OCI-LY7 (cell line): ENCODE measurements at regions of chr12 and their contacts with region 1.

Region 1: DNA sequence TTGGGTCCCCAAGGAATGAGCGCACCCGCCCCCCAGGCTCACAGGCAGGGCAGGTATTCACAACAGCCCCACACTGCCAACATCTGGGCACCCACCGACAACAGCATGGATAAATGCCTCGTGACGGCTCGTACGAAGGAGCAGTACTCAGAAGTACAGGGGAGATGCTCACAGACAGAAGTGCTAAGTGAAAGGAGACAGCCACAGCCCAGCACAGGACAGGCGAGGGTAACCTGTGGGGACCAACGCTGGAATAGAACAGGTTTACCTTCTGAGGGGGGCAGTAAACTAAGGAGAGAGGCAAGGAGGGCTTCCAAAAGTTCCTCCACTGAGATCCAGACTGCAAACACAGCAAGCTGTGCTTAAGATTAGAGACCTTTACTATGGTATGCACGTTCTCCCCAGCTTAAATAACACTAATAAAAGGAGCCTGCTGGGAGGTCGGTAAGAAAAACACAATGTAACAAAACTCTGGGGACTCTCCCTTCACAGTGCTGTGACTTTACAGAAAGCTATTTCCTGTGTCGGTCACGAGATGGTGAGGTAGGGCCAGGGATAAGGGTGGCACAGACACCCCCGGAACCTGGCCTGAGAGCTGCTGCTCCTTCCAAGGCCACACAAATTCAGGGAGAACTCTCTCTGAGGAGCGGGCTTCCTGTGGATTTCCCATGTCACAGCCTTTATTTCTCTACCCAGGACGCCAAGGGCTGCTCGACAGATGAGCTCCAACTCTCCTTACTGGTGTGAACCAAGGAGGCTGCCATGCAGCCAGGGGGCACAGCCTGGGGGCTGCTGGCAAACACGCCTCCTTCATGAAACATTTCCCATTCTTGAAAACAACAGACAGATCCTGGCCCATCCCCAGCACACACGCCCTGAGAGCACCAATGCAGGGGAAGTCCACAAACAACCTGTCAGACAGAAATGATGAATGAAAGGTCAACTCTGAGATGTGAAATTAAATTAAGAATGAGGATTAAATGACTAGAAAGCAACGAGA is 26.3 kb downstream of the SLC15A4 start:
- DNase-seq: peak; percentile 46
- H3K4me3 ChIP-seq: peak overlapping the region; percentile 44
- H3K27ac ChIP-seq: peak overlapping the region; percentile 100
- H3K4me1 ChIP-seq: peaks cover 85% of the 10 kb centered on the region
- CTCF ChIP-seq: no peak

Region 2: DNA sequence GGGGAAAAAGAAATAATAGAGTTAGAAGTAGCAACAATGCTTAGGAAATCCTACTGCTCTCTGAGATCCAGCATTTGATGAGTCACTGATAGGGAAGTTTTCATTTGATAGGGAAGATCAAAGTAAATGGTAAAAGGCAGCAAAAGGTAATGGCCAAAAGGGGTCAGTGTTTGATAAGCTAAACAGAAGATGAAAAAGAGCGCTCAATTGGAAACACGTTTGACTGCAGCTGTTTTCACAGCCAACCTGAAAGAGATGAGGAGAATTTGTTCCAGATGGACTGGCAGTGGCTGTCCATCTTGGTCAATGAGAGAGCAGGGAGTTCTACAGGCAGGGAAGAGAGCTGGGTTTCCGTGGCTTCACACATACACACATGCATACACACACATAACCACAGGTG is 266.2 kb before region 1 on chr12:
- CTCF ChIA-PET with region 1: no interaction called
- POLR2A ChIA-PET with region 1: no interaction called
- intact Hi-C with region 1: loop called (anchors 5 kb)
- DNase-seq: peak; percentile 65
- H3K4me3 ChIP-seq: no peak overlapping the region
- H3K27ac ChIP-seq: no peak overlapping the region
- H3K4me1 ChIP-seq: peaks cover 20% of the 10 kb centered on the region
- CTCF ChIP-seq: peak; percentile 84

Region 3: GRCh38 chr12:128810182-128811127 is 13.0 kb after region 1 on chr12:
- CTCF ChIA-PET with region 1: interaction called, 4 read pairs
- POLR2A ChIA-PET with region 1: interaction called, 10 read pairs
- intact Hi-C with region 1: no loop called
- DNase-seq: peak; percentile 33
- H3K4me3 ChIP-seq: peak overlapping the region; percentile 36
- H3K27ac ChIP-seq: peak overlapping the region; percentile 33
- H3K4me1 ChIP-seq: peaks cover 31% of the 10 kb centered on the region
- CTCF ChIP-seq: no peak

Region 4: GRCh38 chr12:128817111-128818015 is 19.9 kb after region 1 on chr12:
- CTCF ChIA-PET with region 1: interaction called, 5 read pairs
- POLR2A ChIA-PET with region 1: interaction called, 60 read pairs
- intact Hi-C with region 1: loop called (anchors 1 kb)
- DNase-seq: no peak
- H3K4me3 ChIP-seq: peak overlapping the region; percentile 56
- H3K27ac ChIP-seq: peak overlapping the region; percentile 74
- H3K4me1 ChIP-seq: peaks cover 68% of the 10 kb centered on the region
- CTCF ChIP-seq: no peak

Region 5: DNA sequence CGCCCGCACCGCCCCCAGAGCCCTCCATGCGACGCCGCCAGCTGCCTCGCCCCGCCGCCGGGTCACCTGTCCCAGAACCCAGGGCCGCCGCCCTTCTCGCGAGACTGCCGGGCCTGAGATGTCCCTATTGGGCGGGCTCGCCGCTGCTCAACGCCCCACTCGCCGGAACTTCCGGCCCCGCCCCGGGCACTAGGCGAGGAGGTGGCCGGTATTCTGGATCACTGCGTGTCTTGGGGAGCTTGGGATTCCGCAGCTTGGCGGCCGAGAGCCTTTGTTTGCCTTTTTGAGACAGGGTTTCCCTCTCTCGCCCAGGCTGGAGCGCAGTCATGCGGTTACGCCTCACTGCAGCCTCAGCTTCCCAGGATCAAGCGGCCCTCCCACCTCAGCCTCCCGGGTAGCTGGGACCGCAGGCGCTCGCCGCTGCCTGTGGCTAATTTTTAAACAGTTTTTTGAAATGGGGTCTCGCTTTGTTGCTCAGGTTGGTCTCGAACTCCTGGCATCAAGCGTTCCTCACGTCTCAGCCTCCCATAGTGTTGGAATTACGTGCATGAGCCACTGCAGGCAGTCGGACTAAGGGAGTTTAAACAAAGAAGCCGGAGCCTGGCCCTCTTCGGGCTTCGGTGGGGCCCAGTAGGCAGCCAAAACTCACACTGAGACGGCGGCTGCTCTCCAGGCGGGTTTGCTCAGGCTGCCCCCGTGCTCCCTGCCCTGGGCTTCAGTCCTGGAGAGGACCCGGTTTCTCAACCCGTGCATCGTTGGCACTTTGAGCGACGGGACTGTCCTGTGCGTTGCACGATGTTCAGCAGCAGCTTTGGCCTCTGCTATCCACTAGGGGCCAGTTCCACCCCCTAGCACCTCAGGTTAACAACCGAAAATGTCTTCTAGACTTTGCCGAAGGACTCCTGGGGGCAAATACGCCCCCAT is 26.8 kb after region 1 on chr12 and contains the start of gene SLC15A4:
- CTCF ChIA-PET with region 1: interaction called, 5 read pairs
- POLR2A ChIA-PET with region 1: interaction called, 60 read pairs
- intact Hi-C with region 1: loop called (anchors 1 kb)
- DNase-seq: peak; percentile 96
- H3K4me3 ChIP-seq: peak within 1 kb of the TSS; percentile 99
- H3K27ac ChIP-seq: peak within 1 kb of the TSS; percentile 84
- H3K4me1 ChIP-seq: peaks cover 69% of the 10 kb centered on the region
- CTCF ChIP-seq: no peak; the same call in 1 of the 2 replicates
- total RNA-seq, gene SLC15A4: 46.7 and 53.3 TPM in 2 replicates

Region 6: DNA sequence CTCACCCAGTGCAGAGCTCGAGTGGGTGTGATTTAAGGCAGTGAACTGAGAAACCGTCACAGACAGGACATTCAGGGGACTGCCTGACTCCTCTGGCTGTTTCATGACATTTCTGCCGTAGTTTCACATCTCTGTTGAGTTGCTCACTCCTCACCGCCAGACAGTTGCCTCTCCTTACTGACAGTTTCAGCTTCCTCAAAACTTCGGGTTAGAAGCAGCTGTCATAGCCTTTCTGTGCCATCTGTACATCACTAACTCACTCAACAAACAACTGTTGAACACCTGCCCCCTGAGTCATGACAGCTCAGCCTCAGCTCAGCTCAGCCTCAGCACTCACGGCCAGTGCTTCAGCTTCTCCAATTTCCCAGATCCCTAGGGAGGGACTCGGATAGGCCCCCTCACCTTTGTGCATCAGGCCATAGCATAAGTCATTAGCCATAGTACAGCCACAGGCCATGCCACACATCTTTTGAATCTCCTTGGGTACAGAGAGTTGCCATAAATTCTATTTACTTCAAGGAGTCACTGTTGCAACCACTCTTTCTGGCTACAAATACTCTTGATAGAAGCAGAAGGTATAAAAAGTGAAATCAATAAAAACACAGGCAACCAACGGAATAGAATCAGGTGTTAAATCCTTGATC is 32.6 kb after region 1 on chr12:
- CTCF ChIA-PET with region 1: interaction called, 3 read pairs
- POLR2A ChIA-PET with region 1: interaction called, 9 read pairs
- intact Hi-C with region 1: loop called (anchors 1 kb)
- DNase-seq: peak; percentile 95
- H3K4me3 ChIP-seq: peak overlapping the region; percentile 44
- H3K27ac ChIP-seq: peak overlapping the region; percentile 92
- H3K4me1 ChIP-seq: peaks cover 61% of the 10 kb centered on the region
- CTCF ChIP-seq: no peak

Region 7: DNA sequence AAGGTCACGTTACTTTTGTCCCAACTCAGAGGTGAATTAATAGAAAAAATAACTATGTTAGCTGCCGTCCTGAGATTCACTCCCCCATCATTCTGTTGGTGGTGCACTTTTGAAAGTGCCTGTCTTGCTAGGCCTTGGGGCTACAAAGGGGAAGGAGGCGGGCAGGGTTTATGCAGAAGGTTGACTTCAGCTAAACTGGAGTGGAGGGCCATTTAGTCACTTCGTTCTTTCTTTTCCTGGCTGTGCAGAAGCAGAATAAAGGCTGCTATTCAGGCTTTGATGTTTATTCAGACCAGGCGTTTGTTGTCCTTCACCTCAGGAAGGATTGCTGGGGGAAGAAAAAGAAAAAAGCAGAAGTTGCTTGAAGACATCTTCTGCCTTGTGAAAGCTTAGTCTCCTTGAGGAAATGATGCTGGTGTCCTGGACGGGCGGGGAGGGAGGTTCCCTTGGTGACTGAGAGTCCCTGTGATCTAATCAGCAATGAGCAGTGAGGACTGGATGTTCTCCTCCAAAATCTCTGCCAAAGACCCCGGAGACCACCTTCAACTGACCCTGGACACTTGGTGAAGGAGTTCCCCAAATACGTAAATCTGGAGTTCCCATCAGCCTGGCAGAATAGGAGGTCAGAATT is 59.8 kb after region 1 on chr12:
- CTCF ChIA-PET with region 1: no interaction called
- POLR2A ChIA-PET with region 1: no interaction called
- intact Hi-C with region 1: no loop called
- DNase-seq: no peak
- H3K4me3 ChIP-seq: no peak overlapping the region
- H3K27ac ChIP-seq: no peak overlapping the region
- H3K4me1 ChIP-seq: no peaks in the 10 kb centered on the region
- CTCF ChIP-seq: no peak